ENCODE measurements at regions of chr4 and their contacts with region 1.

Region 1: GRCh38 chr4:186201535-186202230 is 10.3 kb downstream of the CYP4V2 start:
- DNase-seq: peak; percentile 79
- H3K4me3 Mint-ChIP-seq: peak overlapping the region; percentile 13
- H3K27ac Mint-ChIP-seq: peak overlapping the region; percentile 57
- H3K4me1 Mint-ChIP-seq: peaks cover 34% of the 10 kb centered on the region
- H3K27me3 Mint-ChIP-seq: no peaks in the 10 kb centered on the region

Region 2: GRCh38 chr4:185896823-185897488 is 304.7 kb before region 1 on chr4:
- CTCF ChIA-PET with region 1: no interaction called
- intact Hi-C with region 1: no loop called
- DNase-seq: no peak
- H3K4me3 Mint-ChIP-seq: no peak overlapping the region
- H3K27ac Mint-ChIP-seq: no peak overlapping the region
- H3K4me1 Mint-ChIP-seq: no peaks in the 10 kb centered on the region
- H3K27me3 Mint-ChIP-seq: peaks cover 2% of the 10 kb centered on the region

Region 3: GRCh38 chr4:186013419-186014186 is 188.1 kb before region 1 on chr4:
- CTCF ChIA-PET with region 1: no interaction called
- intact Hi-C with region 1: no loop called
- DNase-seq: no peak
- H3K4me3 Mint-ChIP-seq: no peak overlapping the region
- H3K27ac Mint-ChIP-seq: no peak overlapping the region
- H3K4me1 Mint-ChIP-seq: no peaks in the 10 kb centered on the region
- H3K27me3 Mint-ChIP-seq: peaks cover 19% of the 10 kb centered on the region

Region 4: GRCh38 chr4:186067757-186068385 is 133.8 kb before region 1 on chr4:
- CTCF ChIA-PET with region 1: interaction called, 3 read pairs
- intact Hi-C with region 1: loop called (anchors 1 kb)
- DNase-seq: peak; percentile 65
- H3K4me3 Mint-ChIP-seq: no peak overlapping the region
- H3K27ac Mint-ChIP-seq: no peak overlapping the region
- H3K4me1 Mint-ChIP-seq: peaks cover 11% of the 10 kb centered on the region
- H3K27me3 Mint-ChIP-seq: peaks cover 7% of the 10 kb centered on the region

Region 5: GRCh38 chr4:186144142-186144955 is 57.3 kb before region 1 on chr4:
- CTCF ChIA-PET with region 1: no interaction called
- intact Hi-C with region 1: loop called (anchors 2 kb)
- DNase-seq: peak; percentile 22
- H3K4me3 Mint-ChIP-seq: peak overlapping the region; percentile 65
- H3K27ac Mint-ChIP-seq: no peak overlapping the region
- H3K4me1 Mint-ChIP-seq: peaks cover 2% of the 10 kb centered on the region
- H3K27me3 Mint-ChIP-seq: peaks cover 37% of the 10 kb centered on the region

Region 6: DNA sequence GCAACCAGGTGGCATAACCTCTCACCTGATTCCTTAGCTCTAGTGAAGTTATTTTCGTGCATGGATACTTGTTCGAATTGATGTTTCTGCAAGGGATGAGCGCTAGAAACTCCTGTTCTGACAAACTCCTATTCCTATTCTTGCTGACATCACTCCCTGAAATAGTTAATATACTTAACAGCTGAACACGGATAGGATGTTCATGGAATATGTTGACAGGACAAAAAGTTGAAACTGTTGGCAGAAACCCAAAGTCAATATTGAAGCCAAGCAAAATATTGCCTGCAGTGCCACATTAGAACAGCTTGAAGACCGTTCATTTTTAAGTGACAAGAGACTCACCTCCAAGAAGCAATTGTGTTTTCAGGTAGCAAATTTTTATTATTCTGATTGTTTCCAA is 25.5 kb after region 1 on chr4 and contains the start of gene KLKB1:
- CTCF ChIA-PET with region 1: no interaction called
- intact Hi-C with region 1: no loop called
- DNase-seq: no peak
- H3K4me3 Mint-ChIP-seq: no peak within 1 kb of the TSS
- H3K27ac Mint-ChIP-seq: no peak within 1 kb of the TSS
- H3K4me1 Mint-ChIP-seq: no peaks in the 10 kb centered on the region
- H3K27me3 Mint-ChIP-seq: peaks cover 7% of the 10 kb centered on the region
- total RNA-seq, gene KLKB1: not detected

Region 7: DNA sequence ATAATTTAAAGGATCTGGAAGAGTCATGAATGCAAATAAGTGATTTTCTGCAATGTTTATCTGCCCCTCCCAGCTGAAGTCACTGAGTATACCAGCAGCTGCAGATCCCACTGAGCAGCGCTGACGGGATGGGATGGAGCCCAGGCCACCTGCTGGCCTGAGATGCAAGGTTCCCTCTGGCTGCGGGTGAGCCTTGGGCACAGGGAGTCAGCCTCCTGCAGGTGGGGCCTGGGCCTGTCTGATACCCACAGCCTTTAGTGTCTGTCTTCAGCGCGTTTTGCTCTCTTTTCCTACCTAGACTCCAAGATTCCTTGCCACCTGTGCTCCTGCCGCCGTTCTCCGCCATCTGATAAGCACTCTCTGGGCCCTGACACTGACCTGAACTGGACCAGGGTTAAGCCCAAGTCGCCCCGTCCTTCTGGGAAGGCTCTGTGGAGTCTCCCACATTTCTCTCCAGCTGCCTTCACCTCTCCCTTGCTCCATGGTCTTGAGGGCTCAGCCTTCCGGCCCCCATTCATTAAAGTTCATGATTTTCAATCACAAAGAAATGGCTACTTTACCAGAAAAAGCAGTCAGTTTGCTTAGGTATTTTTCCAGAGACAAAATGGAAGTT is 745.1 kb after region 1 on chr4:
- CTCF ChIA-PET with region 1: no interaction called
- intact Hi-C with region 1: no loop called
- DNase-seq: no peak
- H3K4me3 Mint-ChIP-seq: no peak overlapping the region
- H3K27ac Mint-ChIP-seq: no peak overlapping the region
- H3K4me1 Mint-ChIP-seq: no peaks in the 10 kb centered on the region
- H3K27me3 Mint-ChIP-seq: no peaks in the 10 kb centered on the region

Measured in activated naive CD4-positive, alpha-beta T cell treated with anti-CD3 and anti-CD28 coated beads for 36 hours (primary cell).